Gastrocnemius medialis (tissue), 4 donors: ENCODE measurements at regions of chr13 and their contacts with region 1.

Region 1: GRCh38 chr13:28138012-28138755 is at the start of gene PAN3:
- DNase-seq: peak; percentile 77 to 87
- ATAC-seq: peak; percentile 91
- H3K4me3 ChIP-seq: peak within 1 kb of the TSS; percentile 79 to 99 (median 88)
- H3K27ac ChIP-seq: peak within 1 kb of the TSS; percentile 93 to 99 (median 94)
- H3K4me1 ChIP-seq: peaks cover 27 to 37% of the 10 kb centered on the region in 2 donors
- H3K27me3 ChIP-seq: no peaks in the 10 kb centered on the region
- CTCF ChIP-seq: peak in 1 of 5 experiments; percentile 34
- POLR2A ChIP-seq: peak; percentile 56 to 72
- total RNA-seq, gene PAN3: 5.5 to 14.7 (median 9.4) TPM

Region 2: GRCh38 chr13:27270594-27271520 is 867.3 kb before region 1 on chr13 and contains the start of gene RASL11A:
- in situ Hi-C with region 1: loop called in 1 of 4 experiments (anchors 25 kb)
- intact Hi-C with region 1: loop called (anchors 10 kb)
- DNase-seq: peak; percentile 57 to 71
- ATAC-seq: peak; percentile 86 to 90
- H3K4me3 ChIP-seq: peak within 1 kb of the TSS; percentile 65 to 91 (median 74)
- H3K27ac ChIP-seq: peak within 1 kb of the TSS; percentile 75 to 86 (median 84)
- H3K4me1 ChIP-seq: peaks cover 4 to 6% of the 10 kb centered on the region in 2 donors
- H3K27me3 ChIP-seq: no peaks in the 10 kb centered on the region
- CTCF ChIP-seq: peak; percentile 84 to 96 (median 87)
- POLR2A ChIP-seq: peak; percentile 61 to 87
- total RNA-seq, gene RASL11A: 2.8 to 9.0 (median 5.7) TPM

Region 3: DNA sequence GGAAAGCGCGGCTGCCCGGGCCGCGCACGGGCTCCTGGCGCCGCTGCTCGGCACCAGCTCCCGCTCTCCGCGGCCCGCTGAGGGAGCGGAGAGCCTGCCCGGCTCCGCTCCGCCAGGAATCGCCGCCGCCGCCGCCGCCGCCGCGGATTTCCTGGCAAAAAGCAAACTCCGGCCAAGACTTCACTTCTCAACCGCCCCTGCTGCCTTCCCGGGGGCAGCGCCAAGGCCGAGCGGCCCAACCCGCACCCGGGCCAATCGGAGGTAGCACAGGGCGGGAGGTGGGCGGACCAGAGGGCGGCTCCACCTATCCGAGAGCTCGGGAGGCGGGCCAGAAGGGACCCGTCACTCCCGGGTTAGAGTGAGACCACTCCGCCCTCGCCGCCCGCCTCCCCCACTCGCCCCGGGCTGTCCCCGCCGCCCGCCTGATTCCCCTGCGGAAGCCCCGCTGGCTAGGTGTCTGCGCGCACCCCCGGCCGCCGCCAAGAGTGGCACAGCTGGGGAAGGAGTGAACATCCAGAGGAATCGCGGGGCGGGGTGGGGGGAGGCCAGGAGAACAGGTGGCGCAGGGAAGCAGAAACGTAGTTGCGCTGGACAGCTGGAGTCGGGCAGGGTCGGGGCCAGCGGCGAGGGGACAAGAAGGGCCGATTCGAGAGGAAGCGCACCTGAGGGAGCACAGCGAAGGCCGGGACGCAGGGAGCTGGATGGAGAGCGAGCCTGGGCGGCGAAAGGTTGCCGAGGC is 517.6 kb before region 1 on chr13 and contains the start of gene LNX2:
- in situ Hi-C with region 1: no loop called
- intact Hi-C with region 1: loop called (anchors 5 kb)
- DNase-seq: peak; percentile 98 to 99
- ATAC-seq: peak; percentile 72 to 73
- H3K4me3 ChIP-seq: peak within 1 kb of the TSS; percentile 69 to 98 (median 90)
- H3K27ac ChIP-seq: peak within 1 kb of the TSS; percentile 95 to 100 (median 99)
- H3K4me1 ChIP-seq: peaks cover 30 to 44% of the 10 kb centered on the region in 2 donors
- H3K27me3 ChIP-seq: no peaks in the 10 kb centered on the region
- CTCF ChIP-seq: peak in 2 of 5 experiments; percentile 24 to 29
- POLR2A ChIP-seq: peak; percentile 92 to 94
- total RNA-seq, gene LNX2: 5.0 to 7.1 (median 6.2) TPM

Region 4: DNA sequence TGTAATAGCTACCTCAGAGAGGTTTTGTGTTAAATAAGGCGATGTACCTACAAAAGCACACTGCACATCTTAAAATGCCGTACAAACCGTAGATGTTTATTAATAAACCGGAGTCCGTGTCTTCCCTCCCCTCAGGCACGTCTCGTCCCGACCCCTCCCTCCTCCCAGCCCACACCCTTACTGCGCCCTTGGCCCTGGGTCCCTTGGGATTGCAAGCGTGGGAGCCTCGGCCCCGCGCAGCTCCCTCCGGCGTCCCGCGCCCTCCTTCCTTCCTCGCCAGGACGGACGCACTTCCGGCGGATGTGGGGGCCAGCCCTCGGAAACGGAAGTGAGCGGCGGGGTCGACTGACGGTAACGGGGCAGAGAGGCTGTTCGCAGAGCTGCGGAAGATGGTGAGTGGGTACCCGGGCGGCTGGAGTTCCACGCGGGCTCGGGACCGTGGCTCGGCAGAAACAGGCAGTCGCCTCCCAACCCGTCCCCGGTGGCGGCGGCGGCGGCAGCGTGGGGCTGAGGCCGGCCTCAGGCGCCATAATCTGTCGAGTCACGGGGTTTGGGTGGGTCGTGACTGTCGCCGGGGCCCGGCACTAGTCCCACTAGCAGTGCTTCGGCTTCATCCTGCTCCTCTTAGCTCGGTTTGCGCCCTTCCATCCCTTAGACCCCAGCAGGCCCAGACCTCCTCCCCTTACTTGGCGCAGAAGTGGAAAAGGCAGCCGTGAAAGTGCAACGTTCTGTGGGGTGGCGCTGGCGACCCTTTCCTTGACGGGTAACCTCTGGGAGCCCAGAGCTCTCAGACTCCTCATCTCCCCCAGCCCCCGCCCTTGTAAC is 520.8 kb after region 1 on chr13 and contains the start of gene POMP:
- in situ Hi-C with region 1: loop called in 1 of 4 experiments (anchors 25 kb)
- intact Hi-C with region 1: loop called (anchors 10 kb)
- DNase-seq: peak; percentile 86 to 90
- ATAC-seq: peak; percentile 95 to 97
- H3K4me3 ChIP-seq: peak within 1 kb of the TSS; percentile 77 to 92 (median 86)
- H3K27ac ChIP-seq: peak within 1 kb of the TSS; percentile 93 to 95 (median 95)
- H3K4me1 ChIP-seq: peaks cover 39 to 42% of the 10 kb centered on the region in 2 donors
- H3K27me3 ChIP-seq: no peaks in the 10 kb centered on the region
- CTCF ChIP-seq: peak in 1 of 5 experiments; percentile 14
- POLR2A ChIP-seq: peak; percentile 97 to 99
- total RNA-seq, gene POMP: 162 to 188 (median 176) TPM

Region 5: DNA sequence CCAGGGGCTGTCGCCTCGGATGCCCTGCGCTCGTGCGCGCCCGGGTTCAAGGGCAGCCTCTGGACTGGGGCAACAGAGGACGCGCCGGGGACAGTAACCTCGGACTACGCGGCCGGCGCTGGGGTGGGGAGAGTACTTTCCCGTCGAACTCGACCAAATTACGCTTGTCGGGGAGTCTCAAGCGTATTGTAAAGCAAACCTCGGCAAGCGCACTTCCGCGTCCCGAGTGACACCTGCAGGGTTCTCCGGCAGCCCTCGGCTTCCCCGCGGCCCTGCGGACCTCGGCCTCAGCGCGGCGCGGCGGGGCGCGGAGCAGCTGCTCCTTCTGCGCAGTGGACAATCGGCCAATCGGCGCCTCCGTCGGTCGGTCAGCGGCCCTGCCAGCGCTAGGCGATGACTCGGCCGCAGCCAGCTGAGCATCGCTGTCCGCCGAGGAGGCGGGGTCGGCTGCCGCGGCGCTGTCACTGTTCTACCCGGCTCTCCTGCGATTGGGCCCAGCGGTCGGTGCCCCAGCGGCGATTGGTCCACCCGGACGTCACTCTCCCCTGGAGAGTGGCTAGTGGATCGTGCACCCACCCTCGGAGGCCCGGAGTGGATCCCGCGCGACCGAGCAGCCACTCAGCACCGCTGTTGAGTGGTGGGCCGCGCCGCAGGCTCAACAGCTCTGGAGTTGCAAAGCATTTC is 580.5 kb after region 1 on chr13 and contains the start of gene SLC46A3:
- in situ Hi-C with region 1: loop called in 1 of 4 experiments (anchors 25 kb)
- intact Hi-C with region 1: no loop called
- DNase-seq: peak; percentile 98 to 99
- ATAC-seq: peak; percentile 90 to 92
- H3K4me3 ChIP-seq: peak within 1 kb of the TSS; percentile 68 to 88 (median 81)
- H3K27ac ChIP-seq: peak within 1 kb of the TSS; percentile 95 to 99 (median 96)
- H3K4me1 ChIP-seq: peaks cover 25 to 29% of the 10 kb centered on the region in 2 donors
- H3K27me3 ChIP-seq: no peaks in the 10 kb centered on the region
- CTCF ChIP-seq: peak in 2 of 5 experiments; percentile 25 to 35
- POLR2A ChIP-seq: peak; percentile 77 to 86
- total RNA-seq, gene SLC46A3: 6.9 to 18.0 (median 9.8) TPM